MCF 10A (cell line): ENCODE measurements at regions of chr19 and their contacts with region 1.

Region 1: DNA sequence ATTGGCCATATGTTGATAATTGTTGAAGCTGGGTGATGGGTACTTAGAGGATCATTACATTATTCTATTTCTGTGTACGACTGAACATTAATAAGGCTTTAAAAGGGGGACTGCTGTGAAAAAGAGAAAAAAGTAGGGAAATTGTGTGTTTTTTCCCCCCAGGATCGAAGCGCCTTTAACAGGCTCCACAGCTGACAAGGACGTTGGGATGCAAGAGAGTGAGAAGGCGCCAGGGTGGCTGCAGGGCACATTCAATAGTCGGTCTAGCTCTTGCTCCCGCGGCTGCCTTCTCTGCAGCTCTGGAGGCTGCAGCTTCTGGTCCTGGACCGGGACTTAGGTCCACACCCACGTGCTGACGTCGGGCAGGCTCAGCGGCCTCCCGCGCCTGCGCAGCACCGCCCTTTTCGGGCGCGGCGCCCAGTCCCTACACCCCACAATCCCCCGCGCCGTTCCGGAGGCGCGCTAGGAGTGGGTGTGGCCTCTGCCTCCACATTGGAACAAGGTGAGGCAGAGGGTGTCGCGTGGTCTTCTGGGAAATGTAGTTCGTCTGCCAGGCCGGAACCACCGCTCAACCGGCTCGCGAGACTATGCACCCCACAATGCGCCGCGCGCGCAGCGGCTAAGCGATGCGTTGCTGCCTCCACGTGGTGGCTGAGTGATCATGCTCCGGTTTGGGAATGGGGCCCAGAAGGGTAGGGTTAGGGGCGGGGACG is 4.9 kb upstream of the LRFN3 start:
- DNase-seq: peak; percentile 100
- H3K4me3 Mint-ChIP-seq: peak overlapping the region; percentile 57
- H3K27ac Mint-ChIP-seq: no peak overlapping the region
- H3K4me1 Mint-ChIP-seq: peaks cover 23% of the 10 kb centered on the region
- H3K27me3 Mint-ChIP-seq: peaks cover 21% of the 10 kb centered on the region
- CTCF ChIP-seq: peak; percentile 86

Region 2: GRCh38 chr19:35693830-35694599 is 237.3 kb before region 1 on chr19:
- CTCF ChIA-PET with region 1: no interaction called
- POLR2A ChIA-PET with region 1: no interaction called
- intact Hi-C with region 1: loop called (anchors 1 kb)
- DNase-seq: peak; percentile 93
- H3K4me3 Mint-ChIP-seq: no peak overlapping the region
- H3K27ac Mint-ChIP-seq: no peak overlapping the region
- H3K4me1 Mint-ChIP-seq: no peaks in the 10 kb centered on the region
- H3K27me3 Mint-ChIP-seq: no peaks in the 10 kb centered on the region
- CTCF ChIP-seq: peak; percentile 95

Region 3: DNA sequence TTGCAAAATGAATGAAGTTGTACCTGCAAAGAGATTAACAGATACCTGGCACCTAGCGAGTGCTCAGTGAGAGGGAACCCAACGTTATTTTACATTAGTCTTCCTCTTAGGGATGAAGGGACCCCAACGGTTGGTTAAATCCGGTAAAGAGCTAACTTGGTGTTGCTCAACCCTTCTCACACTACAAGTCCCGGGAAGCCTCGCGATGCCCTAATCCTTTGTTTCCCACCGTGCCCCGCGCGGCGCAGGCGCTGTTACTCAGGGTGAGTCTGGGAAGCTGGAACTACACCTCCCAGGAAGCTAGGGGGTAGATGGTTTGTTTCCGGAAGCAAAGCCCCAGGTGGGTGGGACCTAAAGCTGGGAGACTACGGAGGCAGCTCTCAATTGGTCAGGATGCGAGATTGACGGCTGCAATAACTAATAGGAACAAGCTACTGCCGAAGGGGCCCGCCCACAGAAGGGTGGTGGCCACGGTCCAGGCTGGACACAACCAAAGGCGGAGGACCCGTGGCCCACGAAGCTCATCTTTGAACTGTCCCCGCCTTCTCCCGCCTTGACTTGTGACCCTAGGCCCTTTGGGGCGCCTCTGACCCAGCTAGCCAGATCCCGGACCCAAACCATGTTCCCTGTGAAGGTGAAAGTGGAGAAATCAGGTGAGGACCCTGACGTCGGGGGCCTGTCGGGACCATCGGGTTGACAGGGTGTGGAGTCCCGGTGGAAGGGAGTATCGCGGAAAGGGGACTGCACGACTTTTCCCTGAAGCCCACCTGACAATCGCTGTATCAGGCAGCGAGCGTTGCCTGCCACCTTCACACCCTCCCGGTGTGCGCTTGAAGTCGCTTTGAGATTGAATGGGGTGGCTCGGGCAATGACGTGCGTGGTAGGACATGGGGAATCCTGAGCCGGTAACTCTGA is 183.0 kb before region 1 on chr19 and contains the start of gene LIN37:
- CTCF ChIA-PET with region 1: interaction called, 5 read pairs
- POLR2A ChIA-PET with region 1: interaction called, 11 read pairs
- intact Hi-C with region 1: loop called (anchors 1 kb)
- DNase-seq: peak; percentile 100
- H3K4me3 Mint-ChIP-seq: peak within 1 kb of the TSS; percentile 94
- H3K27ac Mint-ChIP-seq: peak within 1 kb of the TSS; percentile 87
- H3K4me1 Mint-ChIP-seq: peaks cover 27% of the 10 kb centered on the region
- H3K27me3 Mint-ChIP-seq: no peaks in the 10 kb centered on the region
- CTCF ChIP-seq: no peak
- total RNA-seq, gene LIN37: 19.6 and 24.6 TPM in 2 replicates

Region 4: DNA sequence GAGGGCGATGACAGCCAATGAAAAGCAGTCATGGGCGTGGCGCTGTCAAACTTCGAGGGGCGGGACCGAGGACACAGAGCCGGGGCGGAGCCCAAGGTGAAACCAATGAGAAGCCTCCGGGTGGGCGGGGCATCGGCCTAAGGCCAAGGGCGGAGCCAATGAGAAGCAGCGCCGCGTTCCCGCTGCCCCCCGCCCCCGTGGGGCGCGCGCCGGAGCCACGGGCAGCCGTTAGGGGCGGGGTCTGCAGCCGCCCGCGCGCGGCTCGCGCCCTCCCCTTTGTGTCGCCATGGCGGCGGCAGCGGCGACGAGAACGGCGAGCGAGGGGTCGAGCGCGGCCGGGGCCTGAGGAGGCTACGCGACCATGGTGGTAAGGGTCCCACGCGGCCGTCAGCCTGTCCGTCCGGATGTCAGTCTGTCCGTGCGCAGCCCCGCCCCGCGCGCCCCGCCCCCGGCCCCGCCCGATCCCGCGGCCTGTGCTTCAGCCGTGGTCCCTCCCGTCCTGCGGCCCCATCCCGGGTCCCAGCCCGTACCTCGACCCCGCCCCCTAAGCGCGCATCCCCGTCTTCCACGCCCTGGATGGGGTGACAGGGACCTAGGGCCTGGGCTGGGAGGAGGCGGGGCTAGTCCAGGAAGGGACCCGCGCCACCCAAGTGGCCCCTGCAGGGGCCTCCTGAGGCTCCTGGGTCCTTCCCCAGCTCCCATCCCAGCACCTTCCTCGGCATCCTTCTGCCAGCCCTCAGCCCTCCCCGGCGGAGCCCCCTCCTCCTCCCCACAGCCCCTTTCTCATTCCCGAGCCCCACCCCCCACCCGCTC is 155.8 kb before region 1 on chr19 and contains the start of gene ARHGAP33:
- CTCF ChIA-PET with region 1: no interaction called
- POLR2A ChIA-PET with region 1: no interaction called
- intact Hi-C with region 1: loop called (anchors 10 kb)
- DNase-seq: peak; percentile 99
- H3K4me3 Mint-ChIP-seq: peak within 1 kb of the TSS; percentile 79
- H3K27ac Mint-ChIP-seq: no peak within 1 kb of the TSS
- H3K4me1 Mint-ChIP-seq: peaks cover 17% of the 10 kb centered on the region
- H3K27me3 Mint-ChIP-seq: no peaks in the 10 kb centered on the region
- CTCF ChIP-seq: no peak
- total RNA-seq, gene ARHGAP33: 5.4 and 5.6 TPM in 2 replicates

Region 5: DNA sequence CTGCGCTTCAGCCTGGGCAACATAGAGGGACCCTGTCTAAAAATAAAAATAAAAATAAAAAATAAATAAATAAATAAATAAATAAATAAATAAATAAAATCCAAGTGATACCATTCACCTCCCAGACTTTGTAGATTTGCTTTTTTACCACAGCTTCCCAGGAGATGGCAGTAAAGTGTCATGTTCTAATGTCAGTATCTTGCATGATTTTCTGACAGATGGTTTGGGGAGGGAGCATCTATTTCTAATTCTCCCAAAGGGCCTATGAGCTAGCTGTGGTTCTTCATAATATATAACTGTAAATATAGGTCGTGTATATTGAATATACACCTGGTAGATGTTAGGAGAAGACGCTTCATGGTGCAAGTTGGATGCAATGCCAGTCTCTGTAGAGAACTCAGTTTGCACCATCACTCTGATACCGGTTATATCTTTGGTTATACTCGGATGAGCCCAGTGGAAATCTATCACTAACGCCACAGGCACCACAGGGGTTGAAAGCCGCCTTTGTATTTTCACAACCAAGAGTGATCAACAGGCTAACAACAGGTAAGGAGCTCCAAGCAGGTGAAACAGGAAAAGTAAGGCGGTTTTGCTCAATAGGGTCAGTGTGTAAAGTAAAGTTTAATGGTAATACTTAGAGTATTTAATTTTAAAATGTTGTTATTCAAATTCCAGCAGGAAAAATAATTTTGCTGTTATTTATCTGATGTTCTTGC is 49.0 kb before region 1 on chr19:
- CTCF ChIA-PET with region 1: interaction called, 127 read pairs
- POLR2A ChIA-PET with region 1: interaction called, 12 read pairs
- intact Hi-C with region 1: loop called (anchors 1 kb)
- DNase-seq: peak; percentile 81
- H3K4me3 Mint-ChIP-seq: no peak overlapping the region
- H3K27ac Mint-ChIP-seq: no peak overlapping the region
- H3K4me1 Mint-ChIP-seq: peaks cover 9% of the 10 kb centered on the region
- H3K27me3 Mint-ChIP-seq: peaks cover 11% of the 10 kb centered on the region
- CTCF ChIP-seq: peak; percentile 75

Region 6: GRCh38 chr19:35894342-35894741 is 37.0 kb before region 1 on chr19:
- CTCF ChIA-PET with region 1: interaction called, 13 read pairs
- POLR2A ChIA-PET with region 1: interaction called, 5 read pairs
- intact Hi-C with region 1: no loop called
- DNase-seq: no peak
- H3K4me3 Mint-ChIP-seq: no peak overlapping the region
- H3K27ac Mint-ChIP-seq: no peak overlapping the region
- H3K4me1 Mint-ChIP-seq: no peaks in the 10 kb centered on the region
- H3K27me3 Mint-ChIP-seq: no peaks in the 10 kb centered on the region
- CTCF ChIP-seq: no peak

Region 7: DNA sequence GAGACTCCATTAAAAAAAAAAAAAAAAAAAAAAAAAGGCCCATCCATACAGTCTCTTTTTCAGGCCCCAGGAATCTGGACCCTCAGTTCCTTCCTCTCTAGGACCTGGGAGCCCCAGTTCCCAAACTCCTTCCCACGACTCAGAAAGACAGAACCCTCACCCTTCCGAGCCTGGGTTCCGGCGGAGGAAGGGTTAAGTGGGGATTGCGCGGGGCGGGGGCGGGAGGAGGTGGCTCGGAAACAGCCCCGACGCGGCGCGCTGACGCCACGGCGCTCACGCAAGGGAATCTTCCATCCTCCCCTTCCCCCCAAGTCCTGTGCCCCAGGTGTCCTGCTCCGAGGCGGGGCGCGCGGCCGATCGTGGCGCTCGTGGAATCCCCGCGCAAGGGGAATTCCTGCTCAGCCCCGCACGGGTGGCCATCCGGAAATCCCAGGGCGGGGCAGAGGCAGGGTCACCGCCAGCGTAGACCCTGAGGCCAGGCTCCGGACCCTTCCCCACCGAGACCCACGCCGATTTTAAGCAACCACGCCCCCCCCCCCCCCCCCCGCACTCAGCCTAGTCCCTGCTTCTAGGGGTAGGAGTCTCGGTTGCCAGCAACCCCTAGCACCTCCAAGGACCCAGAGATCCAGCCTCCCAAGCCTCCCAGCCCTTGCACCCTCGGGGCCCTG is 31.6 kb before region 1 on chr19:
- CTCF ChIA-PET with region 1: interaction called, 13 read pairs
- POLR2A ChIA-PET with region 1: interaction called, 6 read pairs
- intact Hi-C with region 1: loop called (anchors 2 kb)
- DNase-seq: peak; percentile 87
- H3K4me3 Mint-ChIP-seq: peak overlapping the region; percentile 90
- H3K27ac Mint-ChIP-seq: peak overlapping the region; percentile 90
- H3K4me1 Mint-ChIP-seq: peaks cover 16% of the 10 kb centered on the region
- H3K27me3 Mint-ChIP-seq: no peaks in the 10 kb centered on the region
- CTCF ChIP-seq: no peak